Uterus (tissue), 4 donors: ENCODE measurements at regions of chr11 and their contacts with region 1.

Region 1: DNA sequence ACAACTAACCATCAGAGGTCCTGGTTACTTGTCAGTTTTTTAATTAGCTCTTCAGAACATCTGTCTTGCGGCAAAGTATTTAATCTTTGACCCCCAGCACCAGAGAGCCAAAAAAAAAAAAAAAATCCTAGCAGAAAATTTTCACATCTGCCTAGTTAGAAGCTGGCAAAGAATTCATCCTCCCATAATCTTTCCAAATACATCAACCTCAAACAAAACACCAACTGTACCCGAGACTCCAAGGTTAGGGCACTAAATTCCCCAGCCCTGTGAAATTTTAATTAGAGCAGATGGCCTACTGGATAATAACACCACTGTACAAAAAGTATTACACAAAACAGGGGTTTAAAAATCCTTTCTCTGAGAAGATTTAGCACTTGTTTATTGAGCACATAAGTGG is 55.7 kb downstream of the RAB38 start:
- DNase-seq: no peak
- H3K4me3 ChIP-seq: no peak overlapping the region
- H3K27ac ChIP-seq: no peak overlapping the region
- H3K4me1 ChIP-seq: no peaks in the 10 kb centered on the region
- H3K27me3 ChIP-seq: no peaks in the 10 kb centered on the region
- CTCF ChIP-seq: no peak
- POLR2A ChIP-seq: no peak

Region 2: GRCh38 chr11:88070437-88070836 is 49.1 kb before region 1 on chr11:
- intact Hi-C with region 1: loop called (anchors 2 kb)
- DNase-seq: no peak
- H3K4me3 ChIP-seq: no peak overlapping the region
- H3K27ac ChIP-seq: no peak overlapping the region
- H3K4me1 ChIP-seq: no peaks in the 10 kb centered on the region
- H3K27me3 ChIP-seq: no peaks in the 10 kb centered on the region
- CTCF ChIP-seq: no peak
- POLR2A ChIP-seq: no peak